Psoas muscle (tissue), 8 donors: ENCODE measurements at regions of chr6 and their contacts with region 1.

Region 1: GRCh38 chr6:24980507-24981387 is 45.0 kb upstream of the RIPOR2 start:
- DNase-seq: no peak
- ATAC-seq: no peak
- H3K4me3 ChIP-seq: no peak overlapping the region
- H3K27ac ChIP-seq: no peak overlapping the region
- H3K4me1 ChIP-seq: peaks cover 5% of the 10 kb centered on the region
- H3K27me3 ChIP-seq: no peaks in the 10 kb centered on the region
- CTCF ChIP-seq: no peak

Region 2: GRCh38 chr6:24876499-24877465 is 104.0 kb before region 1 on chr6:
- intact Hi-C with region 1: no loop called
- DNase-seq: no peak
- ATAC-seq: no peak
- H3K4me3 ChIP-seq: no peak overlapping the region
- H3K27ac ChIP-seq: no peak overlapping the region
- H3K4me1 ChIP-seq: peaks cover 11% of the 10 kb centered on the region
- H3K27me3 ChIP-seq: no peaks in the 10 kb centered on the region
- CTCF ChIP-seq: no peak

Region 3: GRCh38 chr6:24910961-24911712 is 69.6 kb before region 1 on chr6:
- intact Hi-C with region 1: loop called in 1 of 2 experiments (anchors 5 kb)
- DNase-seq: peak; percentile 66 to 90
- ATAC-seq: peak; percentile 78 to 81 (median 79)
- H3K4me3 ChIP-seq: peak overlapping the region; percentile 82
- H3K27ac ChIP-seq: peak overlapping the region; percentile 87
- H3K4me1 ChIP-seq: peaks cover 46% of the 10 kb centered on the region
- H3K27me3 ChIP-seq: no peaks in the 10 kb centered on the region
- CTCF ChIP-seq: no peak

Region 4: GRCh38 chr6:24933868-24934401 is 46.8 kb before region 1 on chr6:
- intact Hi-C with region 1: loop called in 1 of 2 experiments (anchors 5 kb)
- DNase-seq: no peak
- ATAC-seq: no peak
- H3K4me3 ChIP-seq: no peak overlapping the region
- H3K27ac ChIP-seq: no peak overlapping the region
- H3K4me1 ChIP-seq: peaks cover 29% of the 10 kb centered on the region
- H3K27me3 ChIP-seq: no peaks in the 10 kb centered on the region
- CTCF ChIP-seq: peak; percentile 25